MCF 10A (cell line): ENCODE measurements at regions of chr16 and their contacts with region 1.

Region 1: GRCh38 chr16:30874821-30875717 is 18.8 kb downstream of the BCL7C start:
- DNase-seq: peak; percentile 85
- H3K4me3 Mint-ChIP-seq: peak overlapping the region; percentile 91
- H3K27ac Mint-ChIP-seq: peak overlapping the region; percentile 72
- H3K4me1 Mint-ChIP-seq: peaks cover 12% of the 10 kb centered on the region
- H3K27me3 Mint-ChIP-seq: no peaks in the 10 kb centered on the region
- CTCF ChIP-seq: no peak

Region 2: GRCh38 chr16:30786936-30787612 is 88.0 kb before region 1 on chr16 and contains the start of gene ZNF629:
- CTCF ChIA-PET with region 1: interaction called, 4 read pairs
- POLR2A ChIA-PET with region 1: interaction called, 10 read pairs
- intact Hi-C with region 1: no loop called
- DNase-seq: peak; percentile 59
- H3K4me3 Mint-ChIP-seq: peak within 1 kb of the TSS; percentile 84
- H3K27ac Mint-ChIP-seq: peak within 1 kb of the TSS; percentile 81
- H3K4me1 Mint-ChIP-seq: peaks cover 10% of the 10 kb centered on the region
- H3K27me3 Mint-ChIP-seq: no peaks in the 10 kb centered on the region
- CTCF ChIP-seq: no peak
- total RNA-seq, gene ZNF629: 10.9 and 14.1 TPM in 2 replicates

Region 3: DNA sequence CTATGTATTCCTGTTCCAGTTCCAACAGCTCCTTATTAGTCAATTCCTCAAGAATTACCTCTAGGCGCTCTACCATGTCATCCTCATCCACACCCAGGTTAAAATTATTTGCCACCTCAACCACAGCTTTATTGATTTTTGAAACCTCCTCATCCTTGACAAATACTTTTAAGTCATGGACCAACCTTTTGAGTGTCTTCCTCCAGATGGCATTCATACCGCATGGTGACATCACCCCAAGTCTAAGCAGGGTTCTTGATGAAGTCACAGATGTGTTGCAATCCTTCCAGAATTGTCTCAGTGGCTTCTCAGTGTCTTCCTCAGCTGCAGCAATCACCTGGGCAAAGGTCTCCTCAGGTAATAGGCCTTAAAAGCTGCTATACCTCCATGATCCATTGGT is 21.3 kb before region 1 on chr16:
- CTCF ChIA-PET with region 1: interaction called, 4 read pairs
- POLR2A ChIA-PET with region 1: interaction called, 16 read pairs
- intact Hi-C with region 1: no loop called
- DNase-seq: no peak
- H3K4me3 Mint-ChIP-seq: no peak overlapping the region
- H3K27ac Mint-ChIP-seq: no peak overlapping the region
- H3K4me1 Mint-ChIP-seq: peaks cover 8% of the 10 kb centered on the region
- H3K27me3 Mint-ChIP-seq: no peaks in the 10 kb centered on the region
- CTCF ChIP-seq: no peak

Region 4: DNA sequence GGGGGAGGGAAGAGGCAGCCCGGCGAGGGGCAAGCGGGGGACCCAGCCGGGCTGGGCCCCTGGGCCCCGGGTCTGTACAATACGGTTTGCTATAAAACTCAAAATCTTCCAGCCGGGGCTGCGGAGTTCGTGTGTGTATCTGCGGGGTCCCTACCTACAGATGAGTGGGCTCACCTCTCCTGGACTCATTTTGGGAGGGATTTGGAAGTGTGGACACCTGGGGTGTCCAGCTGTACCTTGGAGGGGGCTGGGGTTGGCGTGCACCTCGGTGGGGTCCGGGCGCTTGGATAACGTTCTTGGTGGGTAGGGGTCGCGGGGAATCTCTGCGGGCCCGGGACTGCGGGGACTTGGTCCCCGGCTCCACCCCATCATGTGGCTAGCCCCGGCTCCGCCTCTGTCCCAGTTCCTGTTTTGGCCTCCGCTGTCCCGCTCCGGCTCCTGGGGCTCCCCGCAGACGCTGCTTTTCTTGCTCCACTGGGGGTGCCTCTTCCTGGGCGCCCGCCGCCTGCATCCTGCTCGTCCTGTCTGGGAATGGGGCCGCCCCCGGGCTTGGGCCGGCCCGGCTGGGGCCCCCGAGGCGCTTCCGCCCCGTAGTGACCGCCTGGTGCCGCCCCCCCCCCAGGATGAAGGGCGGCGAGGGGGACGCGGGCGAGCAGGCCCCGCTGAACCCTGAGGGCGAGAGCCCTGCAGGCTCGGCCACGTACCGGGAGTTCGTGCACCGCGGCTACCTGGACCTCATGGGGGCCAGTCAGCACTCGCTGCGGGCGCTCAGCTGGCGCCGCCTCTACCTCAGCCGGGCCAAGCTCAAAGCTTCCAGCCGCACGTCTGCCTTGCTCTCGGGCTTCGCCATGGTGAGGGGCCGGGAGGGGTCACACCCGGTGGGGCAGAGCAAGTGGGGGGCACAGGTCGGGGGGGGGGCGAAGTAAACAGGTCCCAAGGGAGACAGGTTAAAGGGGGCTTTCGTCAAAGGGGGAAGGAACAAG is 73.9 kb after region 1 on chr16 and contains the start of gene ORAI3:
- CTCF ChIA-PET with region 1: interaction called, 7 read pairs
- POLR2A ChIA-PET with region 1: interaction called, 15 read pairs
- intact Hi-C with region 1: no loop called
- DNase-seq: peak; percentile 70
- H3K4me3 Mint-ChIP-seq: peak within 1 kb of the TSS; percentile 94
- H3K27ac Mint-ChIP-seq: peak within 1 kb of the TSS; percentile 87
- H3K4me1 Mint-ChIP-seq: no peaks in the 10 kb centered on the region
- H3K27me3 Mint-ChIP-seq: no peaks in the 10 kb centered on the region
- CTCF ChIP-seq: no peak
- total RNA-seq, gene ORAI3: 16.2 and 21.2 TPM in 2 replicates